Right ventricle myocardium inferior (tissue), 1 donor: ENCODE measurements at regions of chr6 and their contacts with region 1.

Region 1: GRCh38 chr6:33425668-33426577 is 6.1 kb downstream of the SYNGAP1 start:
- DNase-seq: peak; percentile 89
- ATAC-seq: peak; percentile 87

Region 2: GRCh38 chr6:33391278-33391921 is 34.5 kb before region 1 on chr6 and contains the start of gene KIFC1:
- intact Hi-C with region 1: loop called (anchors 2 kb)
- DNase-seq: peak; percentile 99
- ATAC-seq: peak; percentile 99
- total RNA-seq, gene KIFC1: 1.3 TPM

Region 3: GRCh38 chr6:33579828-33580714 is 154.1 kb after region 1 on chr6 and contains the start of gene BAK1:
- intact Hi-C with region 1: loop called (anchors 10 kb)
- DNase-seq: peak; percentile 95
- ATAC-seq: peak; percentile 97
- total RNA-seq, gene BAK1: 25.4 TPM